A549 (cell line): ENCODE measurements at regions of chr7 and their contacts with region 1.

Region 1: GRCh38 chr7:143429770-143430698 is 13.2 kb upstream of the TAS2R60 start:
- DNase-seq: no peak
- ATAC-seq: no peak
- H3K4me3 ChIP-seq: no peak overlapping the region
- H3K27ac ChIP-seq: no peak overlapping the region
- H3K4me1 ChIP-seq: 0 out of 3 replicates have a peak, but pooled peaks cover 7% of the 10 kb centered on the region
- CTCF ChIP-seq: no peak
- EP300 ChIP-seq: no peak
- POLR2A ChIP-seq: no peak
- RAD21 ChIP-seq: no peak

Region 2: GRCh38 chr7:143042159-143042789 is 387.8 kb before region 1 on chr7:
- CTCF ChIA-PET with region 1: no interaction called
- POLR2A ChIA-PET with region 1: no interaction called
- DNase-seq: no peak
- ATAC-seq: no peak
- H3K4me3 ChIP-seq: no peak overlapping the region
- H3K27ac ChIP-seq: no peak overlapping the region
- H3K4me1 ChIP-seq: no peaks in the 10 kb centered on the region
- CTCF ChIP-seq: no peak
- EP300 ChIP-seq: no peak
- POLR2A ChIP-seq: no peak
- RAD21 ChIP-seq: no peak

Region 3: DNA sequence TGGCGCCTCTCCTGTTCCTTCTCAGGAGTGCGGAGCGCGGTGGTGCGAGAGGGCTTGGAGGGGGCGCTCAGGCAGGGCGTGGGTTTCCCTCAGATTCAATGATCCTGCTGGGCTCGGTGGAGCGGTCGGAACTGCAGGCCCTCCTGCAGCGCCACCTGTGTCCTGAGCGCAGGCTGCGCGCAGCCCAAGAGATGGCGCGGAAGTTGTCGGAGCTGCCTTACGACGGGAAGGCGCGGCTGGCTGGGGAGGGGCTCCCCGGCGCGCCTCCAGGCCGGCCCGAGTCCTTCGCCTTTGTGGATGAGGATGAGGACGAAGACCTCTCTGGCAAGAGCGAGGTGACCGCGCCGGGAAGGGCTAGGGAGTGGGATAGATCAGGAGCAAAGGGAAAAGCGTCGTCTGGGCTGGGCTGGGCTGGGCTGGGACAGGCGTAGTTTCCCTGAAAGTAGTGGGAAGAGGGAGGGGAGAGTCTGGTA is 84.6 kb before region 1 on chr7:
- CTCF ChIA-PET with region 1: no interaction called
- POLR2A ChIA-PET with region 1: no interaction called
- DNase-seq: peak; percentile 78 to 82
- ATAC-seq: peak; percentile 99 to 100
- H3K4me3 ChIP-seq: peak overlapping the region; percentile 19; the same call in 2 of the 3 replicates
- H3K27ac ChIP-seq: peak overlapping the region; percentile 44 to 63; a peak in 5 of 6 replicates
- H3K4me1 ChIP-seq: no peaks in the 10 kb centered on the region
- CTCF ChIP-seq: peak; percentile 64
- EP300 ChIP-seq: no peak
- POLR2A ChIP-seq: no peak; the same call in 1 of the 2 replicates
- RAD21 ChIP-seq: peak; percentile 36 to 53

Region 4: GRCh38 chr7:143396625-143397556 is 33.1 kb before region 1 on chr7:
- CTCF ChIA-PET with region 1: no interaction called
- POLR2A ChIA-PET with region 1: no interaction called
- DNase-seq: no peak
- ATAC-seq: peak; percentile 3 to 5; a peak in 2 of 6 replicates
- H3K4me3 ChIP-seq: no peak overlapping the region
- H3K27ac ChIP-seq: no peak overlapping the region
- H3K4me1 ChIP-seq: peaks cover 10% of the 10 kb centered on the region; the same call in 1 of the 3 replicates
- CTCF ChIP-seq: no peak
- EP300 ChIP-seq: no peak
- POLR2A ChIP-seq: no peak
- RAD21 ChIP-seq: no peak

Region 5: DNA sequence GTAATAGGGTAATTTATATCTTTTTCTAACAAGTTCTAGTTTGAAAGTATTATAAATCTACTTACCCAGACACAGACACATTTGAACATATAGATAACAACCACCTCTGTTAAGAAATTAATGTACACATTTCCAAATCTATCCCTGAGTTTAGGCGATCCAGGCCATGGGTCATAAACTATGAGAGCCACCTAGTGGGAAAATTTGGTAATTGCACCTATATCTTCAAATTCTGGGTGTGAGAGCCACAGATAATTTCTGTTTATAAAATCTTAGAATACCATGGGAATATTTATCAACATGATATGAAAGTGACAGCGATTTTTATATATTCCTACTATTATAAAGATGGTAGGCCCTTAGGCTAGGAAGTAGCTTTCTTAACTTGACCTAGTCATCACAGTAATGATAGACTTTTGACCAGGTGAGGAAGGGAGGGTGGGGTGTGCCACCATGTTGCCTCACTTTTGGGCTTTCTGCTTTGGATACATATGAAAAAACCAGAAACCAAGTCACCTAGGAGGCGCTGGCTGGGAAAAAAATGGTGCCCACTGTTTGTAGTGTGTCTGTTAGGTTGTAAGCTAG is 13.4 kb before region 1 on chr7:
- CTCF ChIA-PET with region 1: interaction called, 27 read pairs
- POLR2A ChIA-PET with region 1: no interaction called
- DNase-seq: peak; percentile 44 to 78
- ATAC-seq: peak in 1 of 2 experiments; percentile 79; a peak in 3 of 6 replicates
- H3K4me3 ChIP-seq: no peak overlapping the region
- H3K27ac ChIP-seq: no peak overlapping the region
- H3K4me1 ChIP-seq: peaks cover 5% of the 10 kb centered on the region; the same call in 1 of the 3 replicates
- CTCF ChIP-seq: peak; percentile 81
- EP300 ChIP-seq: no peak
- POLR2A ChIP-seq: no peak
- RAD21 ChIP-seq: peak; percentile 79 to 80

Region 6: GRCh38 chr7:143458263-143458662 is 28.2 kb after region 1 on chr7:
- CTCF ChIA-PET with region 1: no interaction called
- POLR2A ChIA-PET with region 1: no interaction called
- DNase-seq: no peak
- ATAC-seq: no peak
- H3K4me3 ChIP-seq: no peak overlapping the region
- H3K27ac ChIP-seq: no peak overlapping the region
- H3K4me1 ChIP-seq: no peaks in the 10 kb centered on the region
- CTCF ChIP-seq: no peak
- EP300 ChIP-seq: no peak
- POLR2A ChIP-seq: no peak
- RAD21 ChIP-seq: no peak